ENCODE measurements at regions of chr16 and their contacts with region 1.

Region 1: GRCh38 chr16:10918294-10919002 is 23.8 kb downstream of the DEXI start:
- DNase-seq: peak; percentile 94
- H3K4me3 Mint-ChIP-seq: no peak overlapping the region
- H3K27ac Mint-ChIP-seq: no peak overlapping the region
- H3K4me1 Mint-ChIP-seq: peaks cover 11% of the 10 kb centered on the region
- H3K27me3 Mint-ChIP-seq: no peaks in the 10 kb centered on the region

Region 2: GRCh38 chr16:10256784-10257641 is 661.4 kb before region 1 on chr16:
- CTCF ChIA-PET with region 1: no interaction called
- intact Hi-C with region 1: loop called (anchors 5 kb)
- DNase-seq: peak; percentile 53
- H3K4me3 Mint-ChIP-seq: no peak overlapping the region
- H3K27ac Mint-ChIP-seq: no peak overlapping the region
- H3K4me1 Mint-ChIP-seq: peaks cover 6% of the 10 kb centered on the region
- H3K27me3 Mint-ChIP-seq: peaks cover 5% of the 10 kb centered on the region

Region 3: GRCh38 chr16:10521681-10522274 is 396.7 kb before region 1 on chr16:
- CTCF ChIA-PET with region 1: interaction called, 3 read pairs
- intact Hi-C with region 1: loop called (anchors 1 kb)
- DNase-seq: peak; percentile 64
- H3K4me3 Mint-ChIP-seq: no peak overlapping the region
- H3K27ac Mint-ChIP-seq: no peak overlapping the region
- H3K4me1 Mint-ChIP-seq: no peaks in the 10 kb centered on the region
- H3K27me3 Mint-ChIP-seq: no peaks in the 10 kb centered on the region

Region 4: DNA sequence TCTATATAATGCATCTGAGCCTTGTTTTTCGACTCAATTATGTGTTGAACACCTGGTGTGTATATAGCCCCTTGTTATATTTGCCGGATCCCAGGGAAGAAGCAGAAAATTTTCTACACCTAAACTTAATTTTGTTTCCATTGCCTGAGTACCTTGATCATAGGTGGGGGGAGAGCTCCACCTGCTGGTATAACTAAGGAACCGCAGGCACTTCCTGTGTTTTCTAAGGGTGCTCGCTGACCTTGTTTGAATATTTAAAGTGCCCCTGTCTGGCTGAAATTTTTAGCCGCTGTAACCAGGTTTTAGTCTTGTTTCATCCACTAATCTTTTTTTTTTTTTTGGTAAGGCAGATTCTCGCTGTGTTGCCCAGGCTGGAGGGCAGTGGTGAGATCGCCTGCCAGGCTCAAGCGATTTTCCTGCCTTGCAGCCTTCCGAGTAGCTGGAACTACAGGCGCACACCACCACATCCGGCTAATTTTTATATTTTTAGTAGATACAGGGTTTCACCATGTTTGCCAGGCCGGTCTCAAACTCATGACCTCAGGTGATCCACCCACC is 181.3 kb before region 1 on chr16:
- CTCF ChIA-PET with region 1: interaction called, 4 read pairs
- intact Hi-C with region 1: loop called (anchors 1 kb)
- DNase-seq: peak; percentile 80
- H3K4me3 Mint-ChIP-seq: peak overlapping the region; percentile 29
- H3K27ac Mint-ChIP-seq: no peak overlapping the region
- H3K4me1 Mint-ChIP-seq: peaks cover 19% of the 10 kb centered on the region
- H3K27me3 Mint-ChIP-seq: no peaks in the 10 kb centered on the region

Region 5: GRCh38 chr16:10871149-10871991 is 47.1 kb before region 1 on chr16:
- CTCF ChIA-PET with region 1: no interaction called
- intact Hi-C with region 1: loop called (anchors 2 kb)
- DNase-seq: peak; percentile 81
- H3K4me3 Mint-ChIP-seq: no peak overlapping the region
- H3K27ac Mint-ChIP-seq: no peak overlapping the region
- H3K4me1 Mint-ChIP-seq: peaks cover 36% of the 10 kb centered on the region
- H3K27me3 Mint-ChIP-seq: peaks cover 43% of the 10 kb centered on the region

Region 6: GRCh38 chr16:11155284-11155806 is 236.9 kb after region 1 on chr16:
- CTCF ChIA-PET with region 1: no interaction called
- intact Hi-C with region 1: no loop called
- DNase-seq: no peak
- H3K4me3 Mint-ChIP-seq: no peak overlapping the region
- H3K27ac Mint-ChIP-seq: no peak overlapping the region
- H3K4me1 Mint-ChIP-seq: peaks cover 5% of the 10 kb centered on the region
- H3K27me3 Mint-ChIP-seq: no peaks in the 10 kb centered on the region